Heart left ventricle (tissue), 16 donors: ENCODE measurements at regions of chr7 and their contacts with region 1.

Region 1: GRCh38 chr7:87312215-87312865 is 33.1 kb upstream of the CROT start:
- DNase-seq: peak in 2 of 5 donors; percentile 44 to 45
- ATAC-seq: peak in 3 of 4 donors; percentile 75 to 86 (median 84)
- H3K4me3 ChIP-seq: no peak overlapping the region
- H3K27ac ChIP-seq: no peak overlapping the region
- H3K4me1 ChIP-seq: no peaks in the 10 kb centered on the region
- H3K27me3 ChIP-seq: no peaks in the 10 kb centered on the region
- CTCF ChIP-seq: peak; percentile 95 to 99 (median 97)
- POLR2A ChIP-seq: no peak

Region 2: GRCh38 chr7:86950360-86950759 is 362.0 kb before region 1 on chr7:
- intact Hi-C with region 1: no loop called
- DNase-seq: peak in 2 of 5 donors; percentile 11 to 49
- ATAC-seq: no peak
- H3K4me3 ChIP-seq: no peak overlapping the region
- H3K27ac ChIP-seq: no peak overlapping the region
- H3K4me1 ChIP-seq: peaks cover 0 to 5% (median 0%) of the 10 kb centered on the region in 12 donors
- H3K27me3 ChIP-seq: no peaks in the 10 kb centered on the region
- CTCF ChIP-seq: no peak
- POLR2A ChIP-seq: no peak

Region 3: DNA sequence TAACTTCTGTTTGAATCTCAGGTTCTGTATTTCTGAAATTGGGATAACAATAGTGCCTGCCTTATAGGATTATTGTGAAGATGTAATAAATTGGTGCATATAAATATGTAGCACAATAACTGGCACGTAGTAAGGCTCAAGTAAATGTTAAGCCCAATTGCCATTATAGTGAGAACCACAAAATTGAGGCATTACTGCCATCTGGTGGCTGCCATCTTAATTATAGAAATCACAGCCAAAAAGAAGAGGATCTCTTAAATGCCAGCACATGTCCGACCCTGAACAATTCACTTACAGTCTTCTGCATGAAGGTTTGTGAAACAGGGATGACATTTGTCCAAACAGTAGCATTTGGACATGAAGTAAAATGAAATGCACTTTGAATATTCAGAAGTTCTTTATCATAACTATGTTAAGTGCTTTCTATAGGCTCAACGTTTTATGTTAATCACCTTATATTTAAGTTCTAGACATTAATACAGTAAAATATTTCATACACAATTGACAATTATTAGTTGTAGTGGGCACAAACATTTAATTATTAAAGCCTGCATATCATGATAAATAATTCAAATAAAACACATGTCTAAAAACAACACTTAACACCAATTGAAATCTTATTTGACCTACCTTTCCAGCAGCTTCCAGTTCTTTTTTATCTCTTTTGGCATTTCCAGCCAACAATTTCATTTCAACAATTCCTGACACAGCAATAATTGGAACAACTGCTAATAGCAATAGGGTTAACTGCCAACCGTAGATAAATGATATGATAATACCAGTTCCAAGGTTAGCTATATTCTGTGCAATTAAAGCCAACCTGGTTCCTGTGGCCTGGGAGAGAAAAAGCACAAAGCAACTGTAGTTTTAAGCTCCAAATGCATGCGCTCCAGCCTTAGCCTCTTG is 104.6 kb after region 1 on chr7:
- intact Hi-C with region 1: loop called (anchors 1 to 2 kb)
- DNase-seq: peak in 3 of 5 donors; percentile 33 to 49 (median 38)
- ATAC-seq: peak in 3 of 4 donors; percentile 61 to 66 (median 62)
- H3K4me3 ChIP-seq: no peak overlapping the region
- H3K27ac ChIP-seq: no peak overlapping the region
- H3K4me1 ChIP-seq: peaks cover 0 to 7% (median 0%) of the 10 kb centered on the region in 12 donors
- H3K27me3 ChIP-seq: no peaks in the 10 kb centered on the region
- CTCF ChIP-seq: peak; percentile 47 to 83 (median 70)
- POLR2A ChIP-seq: no peak

Region 4: DNA sequence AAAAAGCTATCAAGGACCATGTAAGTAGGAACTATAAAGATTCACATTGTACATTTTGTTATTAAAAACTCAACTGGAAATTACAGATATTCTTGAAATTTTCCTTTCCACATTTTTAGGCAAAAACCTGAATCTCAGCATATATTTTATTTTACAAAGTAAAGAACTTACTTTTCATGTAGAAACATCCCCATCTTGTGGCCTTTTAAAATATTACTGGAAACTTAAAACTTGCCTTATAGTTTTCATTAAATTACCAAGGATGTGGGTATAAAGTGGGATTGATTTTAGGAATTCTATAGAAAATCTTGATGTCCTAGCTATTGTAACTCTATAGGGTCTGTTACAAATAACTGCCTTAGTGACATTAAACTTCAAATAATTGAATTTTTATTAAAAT is 574.5 kb after region 1 on chr7:
- intact Hi-C with region 1: loop called in 5 of 10 experiments (anchors 5 to 10 kb)
- DNase-seq: no peak
- ATAC-seq: no peak
- H3K4me3 ChIP-seq: no peak overlapping the region
- H3K27ac ChIP-seq: no peak overlapping the region
- H3K4me1 ChIP-seq: no peaks in the 10 kb centered on the region
- H3K27me3 ChIP-seq: no peaks in the 10 kb centered on the region
- CTCF ChIP-seq: peak; percentile 23 to 65 (median 48)
- POLR2A ChIP-seq: no peak